Esophagus squamous epithelium (tissue), 5 donors: ENCODE measurements at regions of chr7 and their contacts with region 1.

Region 1: DNA sequence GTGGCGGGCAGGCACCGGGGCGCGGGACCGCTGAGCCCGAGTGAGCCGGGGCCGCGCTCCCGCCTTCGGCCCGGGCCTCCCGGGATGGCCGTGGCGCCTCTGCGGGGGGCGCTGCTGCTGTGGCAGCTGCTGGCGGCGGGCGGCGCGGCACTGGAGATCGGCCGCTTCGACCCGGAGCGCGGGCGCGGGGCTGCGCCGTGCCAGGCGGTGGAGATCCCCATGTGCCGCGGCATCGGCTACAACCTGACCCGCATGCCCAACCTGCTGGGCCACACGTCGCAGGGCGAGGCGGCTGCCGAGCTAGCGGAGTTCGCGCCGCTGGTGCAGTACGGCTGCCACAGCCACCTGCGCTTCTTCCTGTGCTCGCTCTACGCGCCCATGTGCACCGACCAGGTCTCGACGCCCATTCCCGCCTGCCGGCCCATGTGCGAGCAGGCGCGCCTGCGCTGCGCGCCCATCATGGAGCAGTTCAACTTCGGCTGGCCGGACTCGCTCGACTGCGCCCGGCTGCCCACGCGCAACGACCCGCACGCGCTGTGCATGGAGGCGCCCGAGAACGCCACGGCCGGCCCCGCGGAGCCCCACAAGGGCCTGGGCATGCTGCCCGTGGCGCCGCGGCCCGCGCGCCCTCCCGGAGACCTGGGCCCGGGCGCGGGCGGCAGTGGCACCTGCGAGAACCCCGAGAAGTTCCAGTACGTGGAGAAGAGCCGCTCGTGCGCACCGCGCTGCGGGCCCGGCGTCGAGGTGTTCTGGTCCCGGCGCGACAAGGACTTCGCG is 534 bp downstream of the FZD9 start:
- DNase-seq: no peak
- H3K4me3 ChIP-seq: peak overlapping the region; percentile 33 to 67 (median 47)
- H3K27ac ChIP-seq: peak overlapping the region in 1 of 4 donors; percentile 39
- H3K4me1 ChIP-seq: peaks cover 0 to 28% (median 0%) of the 10 kb centered on the region in 3 donors
- H3K27me3 ChIP-seq: peaks cover 0 to 51% (median 0%) of the 10 kb centered on the region in 4 donors
- CTCF ChIP-seq: no peak
- POLR2A ChIP-seq: no peak

Region 2: DNA sequence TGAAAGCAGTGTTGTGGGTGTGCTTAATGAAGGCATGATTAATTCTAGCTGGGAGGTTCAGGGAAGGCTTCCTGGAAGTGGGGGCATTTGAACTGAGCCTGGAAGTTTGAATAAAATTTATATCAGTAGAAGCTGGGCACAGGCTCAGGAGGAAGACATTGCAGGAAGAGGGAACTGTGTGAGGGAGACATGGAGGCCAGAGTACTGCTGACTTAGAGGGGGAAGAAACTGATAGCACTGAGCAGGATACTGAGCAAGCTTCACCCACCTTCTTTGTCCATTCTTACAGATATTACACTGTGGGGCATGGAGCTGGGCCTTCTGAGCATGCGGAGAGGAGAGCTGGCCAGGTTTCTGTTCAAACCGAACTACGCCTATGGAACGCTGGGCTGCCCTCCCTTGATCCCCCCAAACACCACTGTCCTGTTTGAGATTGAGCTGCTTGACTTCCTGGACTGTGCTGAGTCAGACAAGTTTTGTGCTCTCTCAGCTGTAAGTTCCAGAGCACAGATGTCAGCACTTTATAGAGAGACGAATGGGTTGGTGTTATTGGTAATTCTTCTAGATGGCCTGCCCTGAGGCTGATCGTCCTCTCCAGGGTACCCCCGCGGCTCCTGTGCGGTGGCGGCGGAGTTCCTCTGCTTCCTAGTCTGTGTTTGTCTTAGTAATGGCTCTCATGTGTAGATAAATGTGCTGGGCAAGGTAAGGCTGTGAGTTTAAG is 104.1 kb before region 1 on chr7:
- intact Hi-C with region 1: loop called (anchors 10 kb)
- DNase-seq: no peak
- H3K4me3 ChIP-seq: no peak overlapping the region
- H3K27ac ChIP-seq: peak overlapping the region in 1 of 4 donors; percentile 28
- H3K4me1 ChIP-seq: no peaks in the 10 kb centered on the region
- H3K27me3 ChIP-seq: peaks cover 0 to 7% (median 0%) of the 10 kb centered on the region in 4 donors
- CTCF ChIP-seq: no peak
- POLR2A ChIP-seq: no peak

Region 3: DNA sequence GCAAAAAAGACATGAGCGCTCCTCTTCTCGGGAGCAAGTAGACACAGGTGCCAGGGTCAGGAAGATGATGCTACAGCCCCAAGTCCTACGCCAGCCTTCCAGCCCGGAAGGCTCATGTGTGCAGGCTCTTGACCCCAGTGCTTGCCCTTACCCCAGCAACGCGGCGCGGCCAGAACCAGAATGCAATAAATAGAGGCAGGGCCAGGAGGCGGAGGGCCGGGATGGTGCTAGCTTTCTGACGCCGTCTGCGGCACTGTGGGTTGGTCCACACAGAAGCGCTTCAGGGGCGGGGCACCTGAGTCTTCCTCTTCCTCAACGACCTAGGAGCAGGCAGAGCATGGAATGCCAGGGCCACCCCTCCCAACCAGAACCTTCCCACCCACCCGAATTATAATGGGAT is 103.0 kb after region 1 on chr7:
- intact Hi-C with region 1: no loop called
- DNase-seq: no peak
- H3K4me3 ChIP-seq: no peak overlapping the region
- H3K27ac ChIP-seq: no peak overlapping the region
- H3K4me1 ChIP-seq: no peaks in the 10 kb centered on the region
- H3K27me3 ChIP-seq: no peaks in the 10 kb centered on the region
- CTCF ChIP-seq: no peak
- POLR2A ChIP-seq: no peak

Region 4: GRCh38 chr7:73701357-73701995 is 267.4 kb after region 1 on chr7:
- intact Hi-C with region 1: no loop called
- DNase-seq: no peak
- H3K4me3 ChIP-seq: no peak overlapping the region
- H3K27ac ChIP-seq: no peak overlapping the region
- H3K4me1 ChIP-seq: peaks cover 21 to 31% (median 22%) of the 10 kb centered on the region in 3 donors
- H3K27me3 ChIP-seq: no peaks in the 10 kb centered on the region
- CTCF ChIP-seq: peak in 2 of 6 experiments; percentile 30 to 35
- POLR2A ChIP-seq: no peak